ENCODE measurements at regions of chr15 and their contacts with region 1.

Region 1: DNA sequence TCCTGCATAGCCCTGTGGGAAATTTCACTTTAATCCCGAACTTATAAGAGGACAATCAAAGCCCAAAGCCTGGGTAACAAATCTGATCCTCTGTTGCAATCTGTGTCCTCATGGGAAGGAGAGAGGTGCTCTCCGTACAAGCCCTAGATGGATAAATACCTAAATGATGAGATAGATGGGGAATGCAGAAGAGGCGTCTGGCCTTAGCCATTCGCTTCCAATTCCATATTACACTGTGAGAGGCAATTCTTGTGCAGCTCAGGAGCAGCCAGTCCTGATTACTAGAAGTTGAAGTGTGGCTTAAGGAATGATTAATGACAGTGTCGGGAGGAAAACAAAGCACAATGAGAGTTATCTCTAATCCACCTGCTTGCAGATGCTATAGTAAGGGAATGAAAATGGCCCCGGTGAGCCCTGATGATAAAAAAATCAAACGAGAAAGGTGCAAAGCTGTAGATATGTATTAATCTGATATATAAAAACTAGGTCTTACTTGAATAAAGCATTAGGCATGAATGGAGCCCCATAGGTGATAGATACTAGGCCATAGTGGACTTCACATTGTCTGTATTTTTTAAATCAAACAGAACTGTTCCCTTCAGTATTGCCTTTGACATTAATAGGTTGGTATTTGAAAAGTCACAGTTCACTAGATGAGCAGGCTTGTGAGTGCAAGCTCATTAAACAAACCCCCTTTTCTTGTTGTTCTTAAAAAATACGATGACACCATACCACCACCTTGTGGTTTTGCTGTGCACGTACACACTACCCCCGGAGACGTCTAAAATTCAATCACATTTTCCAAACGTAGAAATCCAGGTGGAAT is 54.2 kb upstream of the TMCO5A start:
- DNase-seq: peak; percentile 64
- H3K4me3 ChIP-seq: no peak overlapping the region
- H3K27ac ChIP-seq: no peak overlapping the region
- H3K4me1 ChIP-seq: no peaks in the 10 kb centered on the region
- H3K27me3 ChIP-seq: peaks cover 20 to 73% of the 10 kb centered on the region in 2 experiments
- CTCF ChIP-seq: peak; percentile 54 to 61
- POLR2A ChIP-seq: no peak

Region 2: DNA sequence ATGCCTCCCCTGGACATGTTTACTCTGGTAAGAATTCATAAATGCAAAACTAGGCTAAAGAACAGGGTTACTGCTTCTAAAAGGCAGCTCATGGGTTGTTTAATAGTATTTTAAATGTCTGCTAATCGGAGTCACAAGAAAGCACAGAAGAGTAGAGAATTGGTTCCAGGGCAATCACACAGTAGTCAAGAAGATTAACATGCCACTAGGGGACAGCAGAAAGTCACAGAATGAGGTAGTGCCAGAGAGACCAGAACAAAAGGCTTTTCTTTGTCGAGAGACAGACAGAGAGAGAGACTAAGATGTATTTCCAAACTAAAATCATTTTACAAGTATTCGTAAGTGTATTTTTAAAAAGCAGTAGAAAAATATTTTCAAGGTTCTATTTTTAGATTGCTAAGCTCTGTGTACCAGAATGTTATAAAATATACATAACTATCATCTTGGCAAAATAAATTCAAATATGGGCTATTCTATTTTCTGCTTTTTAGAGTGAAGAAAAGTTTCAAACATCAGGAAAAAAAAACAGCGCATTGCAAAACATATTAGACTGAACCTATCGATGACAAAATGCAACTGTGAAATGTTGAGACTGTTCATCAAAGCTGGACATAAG is 1379.1 kb before region 1 on chr15:
- CTCF ChIA-PET with region 1: interaction called, 4 read pairs
- POLR2A ChIA-PET with region 1: no interaction called
- dilution Hi-C with region 1: no loop called
- intact Hi-C with region 1: loop called (anchors 5 kb)
- DNase-seq: peak; percentile 69
- H3K4me3 ChIP-seq: no peak overlapping the region
- H3K27ac ChIP-seq: no peak overlapping the region
- H3K4me1 ChIP-seq: peaks cover 4% of the 10 kb centered on the region
- H3K27me3 ChIP-seq: no peaks in the 10 kb centered on the region
- CTCF ChIP-seq: peak; percentile 55 to 64
- POLR2A ChIP-seq: no peak

Region 3: GRCh38 chr15:36658312-36658711 is 1221.9 kb before region 1 on chr15:
- CTCF ChIA-PET with region 1: no interaction called
- POLR2A ChIA-PET with region 1: no interaction called
- dilution Hi-C with region 1: no loop called
- intact Hi-C with region 1: loop called (anchors 10 kb)
- DNase-seq: no peak
- H3K4me3 ChIP-seq: no peak overlapping the region
- H3K27ac ChIP-seq: no peak overlapping the region
- H3K4me1 ChIP-seq: no peaks in the 10 kb centered on the region
- H3K27me3 ChIP-seq: no peaks in the 10 kb centered on the region
- CTCF ChIP-seq: no peak
- POLR2A ChIP-seq: no peak

Region 4: DNA sequence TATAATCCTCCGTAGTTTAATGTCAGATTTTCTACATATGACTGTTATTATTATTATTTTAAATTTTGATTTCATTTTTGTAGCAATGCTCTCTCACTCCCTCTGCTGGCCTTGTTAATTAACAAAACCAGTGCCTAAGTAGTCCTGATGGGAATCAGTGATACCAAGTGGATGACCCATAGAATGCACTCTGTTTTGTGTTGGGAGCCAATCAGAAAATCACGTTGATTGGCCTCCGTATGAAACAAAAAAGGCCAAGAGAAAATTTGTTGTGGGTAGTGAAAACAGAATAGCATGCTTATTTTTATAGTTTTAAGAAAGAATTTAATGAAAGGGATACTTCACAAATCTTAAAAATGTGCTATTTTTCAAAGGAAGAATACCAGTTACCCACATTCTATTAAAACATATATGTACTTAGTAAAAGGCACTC is 745.5 kb before region 1 on chr15:
- CTCF ChIA-PET with region 1: interaction called, 25 read pairs
- POLR2A ChIA-PET with region 1: no interaction called
- dilution Hi-C with region 1: no loop called
- intact Hi-C with region 1: loop called (anchors 2 kb)
- DNase-seq: peak; percentile 53
- H3K4me3 ChIP-seq: no peak overlapping the region
- H3K27ac ChIP-seq: no peak overlapping the region
- H3K4me1 ChIP-seq: no peaks in the 10 kb centered on the region
- H3K27me3 ChIP-seq: peaks cover 18 to 33% of the 10 kb centered on the region in 2 experiments
- CTCF ChIP-seq: peak; percentile 42 to 54
- POLR2A ChIP-seq: no peak

Region 5: GRCh38 chr15:37452498-37452897 is 427.7 kb before region 1 on chr15:
- CTCF ChIA-PET with region 1: no interaction called
- POLR2A ChIA-PET with region 1: no interaction called
- dilution Hi-C with region 1: no loop called
- intact Hi-C with region 1: no loop called
- DNase-seq: no peak
- H3K4me3 ChIP-seq: no peak overlapping the region
- H3K27ac ChIP-seq: no peak overlapping the region
- H3K4me1 ChIP-seq: no peaks in the 10 kb centered on the region
- H3K27me3 ChIP-seq: no peaks in the 10 kb centered on the region
- CTCF ChIP-seq: no peak
- POLR2A ChIP-seq: no peak

Region 6: DNA sequence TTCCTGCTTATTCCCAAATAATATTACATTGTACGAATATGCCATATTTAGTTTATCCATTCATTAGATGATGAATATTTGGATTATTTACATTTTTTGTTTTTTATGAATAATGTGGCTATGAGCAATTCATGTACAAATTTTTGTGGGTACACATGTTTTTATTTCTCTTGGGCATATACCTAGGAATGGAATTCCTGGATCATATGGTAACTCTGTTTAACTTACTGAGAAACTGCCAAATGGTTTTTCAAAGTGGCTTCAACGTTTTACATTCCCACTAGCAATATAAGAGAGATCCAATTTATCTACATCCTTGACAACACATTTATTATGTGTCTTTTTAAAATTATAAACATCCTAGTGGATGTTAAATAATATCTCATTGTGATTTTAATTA is 307.8 kb before region 1 on chr15:
- CTCF ChIA-PET with region 1: no interaction called
- POLR2A ChIA-PET with region 1: no interaction called
- dilution Hi-C with region 1: no loop called
- intact Hi-C with region 1: no loop called
- DNase-seq: no peak
- H3K4me3 ChIP-seq: no peak overlapping the region
- H3K27ac ChIP-seq: no peak overlapping the region
- H3K4me1 ChIP-seq: no peaks in the 10 kb centered on the region
- H3K27me3 ChIP-seq: no peaks in the 10 kb centered on the region
- CTCF ChIP-seq: no peak
- POLR2A ChIP-seq: no peak

Region 7: DNA sequence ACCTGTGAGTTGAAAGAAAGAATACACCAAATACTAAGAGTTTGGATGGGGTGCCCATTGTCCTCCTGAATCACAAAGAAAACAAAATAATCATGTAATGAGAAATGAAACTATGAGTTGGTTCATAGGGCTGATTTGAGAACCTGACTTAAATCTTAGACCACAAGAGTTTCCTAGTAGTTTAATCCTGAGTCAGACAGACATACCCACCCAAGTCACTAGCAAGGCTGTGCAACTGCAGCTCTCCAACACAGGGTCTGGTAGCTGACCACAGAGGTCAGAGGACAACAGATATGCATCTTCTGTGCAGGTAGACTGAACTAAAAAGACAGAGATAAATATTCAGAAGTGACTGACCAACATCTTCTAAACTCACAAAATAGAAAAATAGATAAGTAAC is 242.1 kb before region 1 on chr15:
- CTCF ChIA-PET with region 1: no interaction called
- POLR2A ChIA-PET with region 1: no interaction called
- dilution Hi-C with region 1: no loop called
- intact Hi-C with region 1: no loop called
- DNase-seq: no peak
- H3K4me3 ChIP-seq: no peak overlapping the region
- H3K27ac ChIP-seq: no peak overlapping the region
- H3K4me1 ChIP-seq: no peaks in the 10 kb centered on the region
- H3K27me3 ChIP-seq: no peaks in the 10 kb centered on the region
- CTCF ChIP-seq: no peak
- POLR2A ChIP-seq: no peak

Region 8: GRCh38 chr15:37751401-37751800 is 128.8 kb before region 1 on chr15:
- CTCF ChIA-PET with region 1: no interaction called
- POLR2A ChIA-PET with region 1: no interaction called
- dilution Hi-C with region 1: no loop called
- intact Hi-C with region 1: no loop called
- DNase-seq: no peak
- H3K4me3 ChIP-seq: no peak overlapping the region
- H3K27ac ChIP-seq: no peak overlapping the region
- H3K4me1 ChIP-seq: no peaks in the 10 kb centered on the region
- H3K27me3 ChIP-seq: no peaks in the 10 kb centered on the region
- CTCF ChIP-seq: no peak
- POLR2A ChIP-seq: no peak

Region 9: GRCh38 chr15:37764733-37765191 is 115.5 kb before region 1 on chr15:
- CTCF ChIA-PET with region 1: interaction called, 93 read pairs
- POLR2A ChIA-PET with region 1: no interaction called
- dilution Hi-C with region 1: no loop called
- intact Hi-C with region 1: loop called (anchors 1 kb)
- DNase-seq: peak; percentile 53
- H3K4me3 ChIP-seq: no peak overlapping the region
- H3K27ac ChIP-seq: no peak overlapping the region
- H3K4me1 ChIP-seq: peaks cover 13% of the 10 kb centered on the region
- H3K27me3 ChIP-seq: no peaks in the 10 kb centered on the region
- CTCF ChIP-seq: peak; percentile 43 to 74
- POLR2A ChIP-seq: no peak

Measured in endothelial cell of umbilical vein (primary cell).